ENCODE measurements at regions of chr11 and their contacts with region 1.

Region 1: GRCh38 chr11:42770444-42771065 is 541.2 kb upstream of the API5 start:
- DNase-seq: no peak
- H3K4me3 ChIP-seq: no peak overlapping the region
- H3K27ac ChIP-seq: no peak overlapping the region
- H3K4me1 ChIP-seq: no peaks in the 10 kb centered on the region
- H3K27me3 ChIP-seq: no peaks in the 10 kb centered on the region
- CTCF ChIP-seq: peak in 9 of 11 experiments; percentile 15 to 65 (median 45)
- POLR2A ChIP-seq: no peak

Region 2: GRCh38 chr11:43282607-43283440 is 512.3 kb after region 1 on chr11:
- intact Hi-C with region 1: loop called (anchors 5 kb)
- DNase-seq: peak; percentile 76
- H3K4me3 ChIP-seq: no peak overlapping the region
- H3K27ac ChIP-seq: no peak overlapping the region
- H3K4me1 ChIP-seq: peaks cover 0 to 14% (median 3%) of the 10 kb centered on the region in 6 donors
- H3K27me3 ChIP-seq: peaks cover 0 to 27% (median 4%) of the 10 kb centered on the region in 7 donors
- CTCF ChIP-seq: peak in 10 of 11 experiments; percentile 44 to 85 (median 74)
- POLR2A ChIP-seq: no peak